CD8-positive, alpha-beta T cell (primary cell): ENCODE measurements at regions of chr7 and their contacts with region 1.

Region 1: DNA sequence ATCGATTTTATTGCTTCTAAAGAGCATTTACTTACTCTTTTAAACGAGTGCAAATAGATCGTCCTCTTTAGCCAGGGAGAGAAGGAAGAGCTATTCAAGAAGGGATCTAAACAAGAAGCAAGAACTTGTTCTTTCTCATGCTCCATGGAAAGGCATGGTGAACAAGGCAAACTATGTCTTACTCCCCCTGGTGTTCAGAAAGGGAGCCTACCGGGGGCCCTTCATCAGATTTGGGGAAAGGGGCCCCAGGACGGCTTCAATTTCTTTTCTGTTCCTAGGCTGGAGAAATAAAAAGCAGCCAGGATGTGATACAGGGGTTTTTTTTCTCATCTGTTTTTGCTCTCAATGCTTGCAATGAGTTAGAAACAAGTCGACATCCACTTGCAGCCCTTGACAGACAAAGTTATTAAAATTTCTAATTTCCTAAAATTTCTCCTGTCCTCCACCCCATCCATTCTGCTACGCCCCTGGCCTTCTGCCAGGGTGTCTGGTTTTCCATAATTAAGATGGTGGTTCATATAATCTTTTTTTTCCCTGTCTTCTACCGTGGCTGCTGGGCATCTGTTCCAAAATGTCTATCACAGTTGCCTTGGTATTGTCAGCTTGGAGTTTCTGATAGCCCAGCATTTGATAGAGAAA is 214.4 kb downstream of the CREB5 start:
- DNase-seq: peak in 2 of 9 experiments; percentile 11 to 32
- ATAC-seq: no peak
- H3K4me3 ChIP-seq: no peak overlapping the region
- H3K4me3 Mint-ChIP-seq: no peak overlapping the region
- H3K27ac ChIP-seq: no peak overlapping the region
- H3K27ac Mint-ChIP-seq: no peak overlapping the region
- H3K4me1 ChIP-seq: no peaks in the 10 kb centered on the region
- H3K4me1 Mint-ChIP-seq: no peaks in the 10 kb centered on the region
- H3K27me3 ChIP-seq: no peaks in the 10 kb centered on the region
- H3K27me3 Mint-ChIP-seq: no peaks in the 10 kb centered on the region
- CTCF ChIP-seq: peak; percentile 16

Region 2: DNA sequence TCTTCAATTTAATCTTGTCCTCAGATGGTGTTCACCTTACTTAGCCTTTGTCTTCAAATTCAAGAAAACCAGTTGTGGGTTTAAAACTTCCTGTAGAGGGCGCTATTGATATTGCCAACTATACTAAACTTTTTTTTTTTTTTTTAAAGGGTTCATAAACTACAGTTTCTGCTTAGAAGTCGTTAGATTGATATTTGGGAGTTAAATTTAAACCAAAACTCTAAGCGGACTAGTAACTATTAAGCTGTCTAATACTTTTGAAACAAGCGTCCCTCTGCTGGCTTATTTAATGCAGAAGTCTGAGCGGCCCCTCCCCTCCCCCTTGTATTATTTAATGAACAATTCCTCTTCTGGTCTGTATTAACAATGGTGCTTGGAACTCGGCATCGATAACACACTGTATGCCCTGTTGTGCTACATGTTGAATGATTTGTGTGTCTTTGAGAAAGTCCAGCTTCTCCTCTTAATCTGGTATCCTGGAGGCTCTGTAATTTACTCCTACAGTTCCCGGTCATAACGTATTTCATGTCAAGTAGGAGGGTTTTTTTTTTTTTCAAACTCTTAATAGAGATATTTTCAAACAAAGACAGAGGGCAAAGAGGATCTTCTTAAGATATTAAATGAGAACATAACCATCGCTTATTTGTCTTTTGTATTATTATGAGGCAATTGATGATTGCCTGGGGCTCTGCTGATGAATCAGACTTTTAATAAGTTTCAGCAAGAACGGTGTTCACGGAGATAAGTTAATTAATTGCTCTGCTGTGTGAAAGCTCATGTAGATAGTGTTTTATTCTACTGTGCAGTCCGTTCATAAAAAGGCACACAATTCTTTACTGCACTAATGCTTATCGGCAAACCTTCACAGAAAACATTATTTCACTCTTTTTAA is 237.0 kb before region 1 on chr7:
- CTCF ChIA-PET with region 1: no interaction called
- POLR2A ChIA-PET with region 1: no interaction called
- intact Hi-C with region 1: loop called in 1 of 2 experiments (anchors 10 kb)
- DNase-seq: peak in 2 of 9 experiments; percentile 41 to 60
- ATAC-seq: no peak
- H3K4me3 ChIP-seq: no peak overlapping the region
- H3K4me3 Mint-ChIP-seq: no peak overlapping the region
- H3K27ac ChIP-seq: no peak overlapping the region
- H3K27ac Mint-ChIP-seq: no peak overlapping the region
- H3K4me1 ChIP-seq: no peaks in the 10 kb centered on the region
- H3K4me1 Mint-ChIP-seq: peaks cover 2% of the 10 kb centered on the region
- H3K27me3 ChIP-seq: peaks cover 0 to 3% of the 10 kb centered on the region in 2 experiments
- H3K27me3 Mint-ChIP-seq: peaks cover 20% of the 10 kb centered on the region
- CTCF ChIP-seq: peak; percentile 80